Breast epithelium (tissue), 4 donors: ENCODE measurements at regions of chr5 and their contacts with region 1.

Region 1: GRCh38 chr5:156277290-156277689 is 49.7 kb upstream of the SGCD start:
- DNase-seq: no peak
- H3K4me3 ChIP-seq: no peak overlapping the region
- H3K27ac ChIP-seq: no peak overlapping the region
- H3K4me1 ChIP-seq: no peaks in the 10 kb centered on the region
- H3K27me3 ChIP-seq: no peaks in the 10 kb centered on the region
- CTCF ChIP-seq: no peak
- POLR2A ChIP-seq: no peak

Region 2: GRCh38 chr5:156051972-156052371 is 225.3 kb before region 1 on chr5:
- intact Hi-C with region 1: loop called (anchors 5 kb)
- DNase-seq: no peak
- H3K4me3 ChIP-seq: no peak overlapping the region
- H3K27ac ChIP-seq: no peak overlapping the region
- H3K4me1 ChIP-seq: no peaks in the 10 kb centered on the region
- H3K27me3 ChIP-seq: no peaks in the 10 kb centered on the region
- CTCF ChIP-seq: no peak
- POLR2A ChIP-seq: no peak